AG04450 (cell line): ENCODE measurements at regions of chr17 and their contacts with region 1.

Region 1: GRCh38 chr17:61251939-61252896 is 147.4 kb upstream of the TBX2 start:
- DNase-seq: peak; percentile 99
- H3K4me3 ChIP-seq: no peak overlapping the region
- H3K27ac ChIP-seq: peak overlapping the region; percentile 95
- H3K27me3 ChIP-seq: no peaks in the 10 kb centered on the region
- CTCF ChIP-seq: no peak

Region 2: DNA sequence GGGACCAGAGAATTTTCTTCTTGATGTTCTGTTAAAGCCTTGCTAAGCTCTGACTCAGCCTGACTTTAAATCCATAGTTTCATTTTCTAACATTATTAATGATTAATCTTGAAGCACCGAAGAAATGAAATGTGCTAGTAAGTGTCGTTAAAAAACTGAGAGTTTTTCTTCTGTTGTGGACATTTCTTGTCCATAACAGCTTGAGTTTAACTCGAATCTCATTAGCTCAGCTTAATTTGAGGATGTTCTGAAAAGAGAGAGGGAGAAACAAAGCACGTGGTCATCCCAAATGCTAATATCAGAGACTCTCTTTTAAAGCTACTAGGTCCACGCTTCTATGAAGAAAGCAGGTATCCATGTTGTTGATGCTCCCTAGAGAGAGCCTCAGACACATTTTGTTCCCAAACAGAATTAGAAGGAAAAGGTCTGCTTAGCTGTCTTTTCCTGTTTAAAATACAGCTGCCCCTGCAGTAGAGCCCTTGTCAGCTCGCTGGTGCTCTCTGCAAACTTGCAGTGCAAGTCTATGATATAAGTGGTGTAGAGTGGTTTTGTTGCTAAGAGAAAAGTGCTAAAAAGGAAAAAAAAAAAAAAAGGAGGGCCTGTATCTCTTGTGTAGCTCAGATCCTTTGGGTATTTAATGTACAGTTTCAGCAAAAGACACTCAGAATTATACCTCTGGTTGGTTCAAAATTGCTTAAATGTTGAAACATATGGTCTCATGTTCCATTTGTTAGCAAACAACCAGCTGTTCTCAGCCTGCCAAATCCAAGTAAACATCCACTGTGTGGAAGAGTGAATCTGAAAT is 43.7 kb before region 1 on chr17:
- CTCF ChIA-PET with region 1: no interaction called
- POLR2A ChIA-PET with region 1: interaction called, 13 read pairs
- DNase-seq: peak; percentile 47
- H3K4me3 ChIP-seq: peak overlapping the region; percentile 1; the same call in 1 of the 2 replicates
- H3K27ac ChIP-seq: peak overlapping the region; percentile 76
- H3K27me3 ChIP-seq: no peaks in the 10 kb centered on the region
- CTCF ChIP-seq: no peak

Region 3: GRCh38 chr17:61399131-61400057 is 147.2 kb after region 1 on chr17 and contains the start of gene TBX2:
- CTCF ChIA-PET with region 1: interaction called, 4 read pairs
- POLR2A ChIA-PET with region 1: interaction called, 16 read pairs
- DNase-seq: peak; percentile 93
- H3K4me3 ChIP-seq: peak within 1 kb of the TSS; percentile 98
- H3K27ac ChIP-seq: peak within 1 kb of the TSS; percentile 90
- H3K27me3 ChIP-seq: no peaks in the 10 kb centered on the region
- CTCF ChIP-seq: no peak
- polyA plus RNA-seq, gene TBX2: 18.3 and 22.0 TPM in 2 replicates